ENCODE measurements at regions of chr2 and their contacts with region 1.

Region 1: GRCh38 chr2:128736689-128737545 is 418.2 kb upstream of the HS6ST1 start:
- DNase-seq: peak; percentile 54
- ATAC-seq: peak; percentile 92
- H3K4me3 ChIP-seq: no peak overlapping the region
- H3K27ac ChIP-seq: no peak overlapping the region
- H3K4me1 ChIP-seq: no peaks in the 10 kb centered on the region
- H3K27me3 ChIP-seq: 0 out of 2 replicates have a peak, but pooled peaks cover 11% of the 10 kb centered on the region
- CTCF ChIP-seq: peak; percentile 68 to 100 (median 98)
- POLR2A ChIP-seq: no peak
- RAD21 ChIP-seq: peak; percentile 69

Region 2: DNA sequence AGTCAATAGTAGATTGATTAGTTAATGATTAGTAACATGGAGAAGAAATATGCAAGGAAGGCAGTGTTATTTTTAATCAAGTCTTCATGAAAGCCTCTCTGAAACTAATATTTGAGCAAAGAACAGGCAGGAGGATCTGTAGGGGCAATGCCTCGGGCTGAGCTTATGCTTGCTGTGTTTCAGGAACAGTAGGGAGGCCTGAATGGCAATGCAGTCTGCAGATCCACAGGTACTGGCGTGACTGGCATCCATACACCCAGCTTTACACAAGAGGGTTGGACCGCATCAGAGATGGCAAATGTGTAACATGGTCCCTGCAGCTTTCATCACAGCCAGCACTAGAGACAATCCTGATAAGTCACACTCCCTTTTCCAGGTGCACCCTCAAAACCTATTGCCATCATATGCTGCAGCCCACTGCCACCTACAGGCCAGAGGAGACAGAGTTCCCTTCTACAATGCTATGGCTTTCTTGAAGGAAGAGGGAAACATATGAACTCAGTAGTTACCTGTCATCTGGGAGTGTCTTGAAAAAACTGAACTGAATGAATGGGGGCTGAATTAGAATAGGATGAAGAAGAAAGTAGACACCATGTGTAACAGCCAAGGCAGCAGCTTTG is 660.2 kb after region 1 on chr2:
- CTCF ChIA-PET with region 1: no interaction called
- POLR2A ChIA-PET with region 1: no interaction called
- RAD21 ChIA-PET with region 1: no interaction called
- intact Hi-C with region 1: loop called (anchors 1 kb)
- DNase-seq: peak; percentile 16
- ATAC-seq: peak; percentile 90
- H3K4me3 ChIP-seq: no peak overlapping the region
- H3K27ac ChIP-seq: no peak overlapping the region
- H3K4me1 ChIP-seq: no peaks in the 10 kb centered on the region
- H3K27me3 ChIP-seq: peaks cover 9% of the 10 kb centered on the region; the same call in 1 of the 2 replicates
- CTCF ChIP-seq: peak; percentile 18 to 75 (median 75); a peak in 5 of 6 replicates
- POLR2A ChIP-seq: no peak
- RAD21 ChIP-seq: peak; percentile 69

Region 3: GRCh38 chr2:129849559-129850160 is 1112.7 kb after region 1 on chr2:
- CTCF ChIA-PET with region 1: no interaction called
- POLR2A ChIA-PET with region 1: no interaction called
- RAD21 ChIA-PET with region 1: no interaction called
- intact Hi-C with region 1: loop called (anchors 2 kb)
- DNase-seq: peak; percentile 74
- ATAC-seq: peak; percentile 78
- H3K4me3 ChIP-seq: no peak overlapping the region
- H3K27ac ChIP-seq: no peak overlapping the region
- H3K4me1 ChIP-seq: no peaks in the 10 kb centered on the region
- H3K27me3 ChIP-seq: peaks cover 10% of the 10 kb centered on the region
- CTCF ChIP-seq: peak; percentile 40 to 74 (median 52); a peak in 5 of 6 replicates
- POLR2A ChIP-seq: no peak
- RAD21 ChIP-seq: peak; percentile 74

Measured in HCT116 (cell line).